Endothelial cell of umbilical vein (primary cell): ENCODE measurements at regions of chr11 and their contacts with region 1.

Region 1: GRCh38 chr11:70191495-70192140 is 11.5 kb upstream of the FADD start:
- DNase-seq: peak; percentile 54
- H3K4me3 ChIP-seq: no peak overlapping the region
- H3K27ac ChIP-seq: no peak overlapping the region
- H3K4me1 ChIP-seq: no peaks in the 10 kb centered on the region
- H3K27me3 ChIP-seq: no peaks in the 10 kb centered on the region
- CTCF ChIP-seq: peak; percentile 84 to 98
- POLR2A ChIP-seq: no peak

Region 2: GRCh38 chr11:69718147-69718546 is 473.5 kb before region 1 on chr11:
- CTCF ChIA-PET with region 1: interaction called, 20 read pairs
- POLR2A ChIA-PET with region 1: no interaction called
- dilution Hi-C with region 1: no loop called
- intact Hi-C with region 1: loop called (anchors 10 kb)
- DNase-seq: peak; percentile 14
- H3K4me3 ChIP-seq: no peak overlapping the region
- H3K27ac ChIP-seq: no peak overlapping the region
- H3K4me1 ChIP-seq: no peaks in the 10 kb centered on the region
- H3K27me3 ChIP-seq: peaks cover 22 to 24% of the 10 kb centered on the region in 2 experiments
- CTCF ChIP-seq: peak; percentile 49 to 64
- POLR2A ChIP-seq: no peak

Region 3: DNA sequence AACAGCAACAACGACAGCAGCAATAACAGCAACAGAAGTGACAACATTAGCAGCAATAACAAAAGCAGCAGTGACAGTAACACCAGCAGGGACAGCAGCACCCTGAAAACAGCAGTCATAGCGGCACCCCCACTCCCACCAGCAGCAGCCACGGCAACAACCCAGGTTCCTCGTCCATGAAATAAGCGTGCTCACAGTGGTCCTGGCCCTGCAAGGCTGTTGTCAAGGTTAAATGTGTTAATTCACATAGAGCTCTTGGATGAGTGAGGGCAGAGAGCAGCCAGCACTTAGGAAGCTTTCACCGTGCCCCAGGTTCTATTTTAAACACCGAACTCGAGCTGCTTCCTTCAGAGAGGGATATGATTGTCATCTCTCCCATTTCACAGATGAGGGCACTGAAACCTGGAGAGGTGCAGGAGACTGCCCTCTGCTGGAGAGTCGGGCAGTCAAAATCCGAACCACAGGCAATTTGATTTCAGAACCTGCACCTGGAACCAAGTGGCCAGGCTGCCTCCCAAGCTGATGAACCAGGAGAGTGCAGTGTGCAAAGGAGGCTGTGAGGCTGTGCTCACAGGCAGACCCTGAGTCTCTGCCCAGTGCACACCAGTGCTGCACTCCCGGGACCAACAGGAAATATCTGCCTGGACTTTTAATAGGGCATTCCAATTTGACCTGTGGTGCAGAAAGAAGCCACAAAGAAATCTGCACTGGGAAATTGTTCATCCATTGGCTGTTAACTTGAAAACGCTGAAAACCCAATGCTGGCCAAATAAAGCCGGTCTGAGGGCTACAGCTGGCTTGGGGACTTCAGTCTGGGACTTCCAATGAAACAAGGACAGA is 349.5 kb before region 1 on chr11:
- CTCF ChIA-PET with region 1: no interaction called
- POLR2A ChIA-PET with region 1: no interaction called
- dilution Hi-C with region 1: no loop called
- intact Hi-C with region 1: no loop called
- DNase-seq: no peak
- H3K4me3 ChIP-seq: no peak overlapping the region
- H3K27ac ChIP-seq: no peak overlapping the region
- H3K4me1 ChIP-seq: no peaks in the 10 kb centered on the region
- H3K27me3 ChIP-seq: no peaks in the 10 kb centered on the region
- CTCF ChIP-seq: peak; percentile 39 to 56
- POLR2A ChIP-seq: no peak

Region 4: GRCh38 chr11:69909561-69910496 is 281.8 kb before region 1 on chr11:
- CTCF ChIA-PET with region 1: interaction called, 70 read pairs
- POLR2A ChIA-PET with region 1: no interaction called
- dilution Hi-C with region 1: loop called (anchors 25 kb)
- intact Hi-C with region 1: loop called (anchors 1 kb)
- DNase-seq: no peak
- H3K4me3 ChIP-seq: no peak overlapping the region
- H3K27ac ChIP-seq: no peak overlapping the region
- H3K4me1 ChIP-seq: no peaks in the 10 kb centered on the region
- H3K27me3 ChIP-seq: no peaks in the 10 kb centered on the region
- CTCF ChIP-seq: peak; percentile 61 to 71
- POLR2A ChIP-seq: no peak

Region 5: DNA sequence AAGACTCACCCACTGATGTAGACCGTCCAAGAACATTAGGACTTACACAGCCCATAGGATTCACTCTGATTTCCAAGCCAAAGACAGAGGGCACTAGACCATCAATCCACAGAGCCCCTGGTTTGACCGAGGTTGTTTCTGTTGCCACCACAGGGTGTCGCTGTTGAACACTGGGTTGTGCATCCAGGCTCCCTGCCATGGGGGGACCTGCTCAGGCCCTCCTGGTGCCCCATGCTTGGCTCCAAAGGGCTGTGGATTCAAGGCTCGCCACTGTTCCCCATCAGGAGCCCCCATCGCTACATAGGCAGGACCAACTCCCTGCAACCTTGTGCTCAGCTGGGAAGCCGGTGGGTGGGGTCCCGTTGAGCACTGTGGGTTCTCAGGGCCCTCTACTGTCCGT is 241.5 kb before region 1 on chr11:
- CTCF ChIA-PET with region 1: interaction called, 7 read pairs
- POLR2A ChIA-PET with region 1: no interaction called
- dilution Hi-C with region 1: no loop called
- intact Hi-C with region 1: loop called (anchors 1 kb)
- DNase-seq: peak; percentile 12
- H3K4me3 ChIP-seq: no peak overlapping the region
- H3K27ac ChIP-seq: peak overlapping the region; percentile 36
- H3K4me1 ChIP-seq: peaks cover 20% of the 10 kb centered on the region
- H3K27me3 ChIP-seq: peaks cover 0 to 2% of the 10 kb centered on the region in 2 experiments
- CTCF ChIP-seq: peak; percentile 45 to 50
- POLR2A ChIP-seq: no peak

Region 6: GRCh38 chr11:70174547-70175235 is 16.9 kb before region 1 on chr11:
- CTCF ChIA-PET with region 1: interaction called, 12 read pairs
- POLR2A ChIA-PET with region 1: no interaction called
- dilution Hi-C with region 1: no loop called
- intact Hi-C with region 1: no loop called
- DNase-seq: no peak
- H3K4me3 ChIP-seq: no peak overlapping the region
- H3K27ac ChIP-seq: no peak overlapping the region
- H3K4me1 ChIP-seq: no peaks in the 10 kb centered on the region
- H3K27me3 ChIP-seq: no peaks in the 10 kb centered on the region
- CTCF ChIP-seq: no peak
- POLR2A ChIP-seq: no peak

Region 7: GRCh38 chr11:70202898-70203748 is 11.5 kb after region 1 on chr11 and contains the start of gene FADD:
- CTCF ChIA-PET with region 1: interaction called, 10 read pairs
- POLR2A ChIA-PET with region 1: no interaction called
- dilution Hi-C with region 1: no loop called
- intact Hi-C with region 1: no loop called
- DNase-seq: peak; percentile 96
- H3K4me3 ChIP-seq: peak within 1 kb of the TSS; percentile 79 to 86 (median 86)
- H3K27ac ChIP-seq: peak within 1 kb of the TSS; percentile 98
- H3K4me1 ChIP-seq: peaks cover 13% of the 10 kb centered on the region
- H3K27me3 ChIP-seq: no peaks in the 10 kb centered on the region
- CTCF ChIP-seq: no peak
- POLR2A ChIP-seq: peak; percentile 93
- total RNA-seq, gene FADD: 42.5 and 45.1 TPM in 2 replicates